Tibial artery (tissue), 4 donors: ENCODE measurements at regions of chr10 and their contacts with region 1.

Region 1: GRCh38 chr10:3239066-3239919 is 66.7 kb upstream of the PITRM1 start:
- DNase-seq: peak; percentile 65 to 76
- H3K4me3 ChIP-seq: no peak overlapping the region
- H3K27ac ChIP-seq: no peak overlapping the region
- H3K4me1 ChIP-seq: peaks cover 0 to 15% (median 2%) of the 10 kb centered on the region in 4 donors
- H3K27me3 ChIP-seq: no peaks in the 10 kb centered on the region
- CTCF ChIP-seq: peak; percentile 88 to 95

Region 2: GRCh38 chr10:3281941-3282673 is 42.8 kb after region 1 on chr10:
- intact Hi-C with region 1: no loop called
- DNase-seq: no peak
- H3K4me3 ChIP-seq: no peak overlapping the region
- H3K27ac ChIP-seq: no peak overlapping the region
- H3K4me1 ChIP-seq: no peaks in the 10 kb centered on the region
- H3K27me3 ChIP-seq: no peaks in the 10 kb centered on the region
- CTCF ChIP-seq: no peak

Region 3: GRCh38 chr10:3426190-3426701 is 187.0 kb after region 1 on chr10:
- intact Hi-C with region 1: no loop called
- DNase-seq: no peak
- H3K4me3 ChIP-seq: no peak overlapping the region
- H3K27ac ChIP-seq: peak overlapping the region in 1 of 2 donors; percentile 36
- H3K4me1 ChIP-seq: peaks cover 0 to 14% (median 9%) of the 10 kb centered on the region in 4 donors
- H3K27me3 ChIP-seq: no peaks in the 10 kb centered on the region
- CTCF ChIP-seq: no peak

Region 4: GRCh38 chr10:4656576-4657182 is 1417.4 kb after region 1 on chr10:
- intact Hi-C with region 1: loop called (anchors 5 kb)
- DNase-seq: peak; percentile 50 to 83
- H3K4me3 ChIP-seq: no peak overlapping the region
- H3K27ac ChIP-seq: no peak overlapping the region
- H3K4me1 ChIP-seq: peaks cover 0 to 29% (median 7%) of the 10 kb centered on the region in 4 donors
- H3K27me3 ChIP-seq: no peaks in the 10 kb centered on the region
- CTCF ChIP-seq: peak; percentile 89

Region 5: GRCh38 chr10:4767033-4767814 is 1527.9 kb after region 1 on chr10:
- intact Hi-C with region 1: loop called (anchors 2 kb)
- DNase-seq: peak in 1 of 2 donors; percentile 28
- H3K4me3 ChIP-seq: no peak overlapping the region
- H3K27ac ChIP-seq: peak overlapping the region; percentile 21 to 22
- H3K4me1 ChIP-seq: peaks cover 0 to 28% (median 15%) of the 10 kb centered on the region in 4 donors
- H3K27me3 ChIP-seq: no peaks in the 10 kb centered on the region
- CTCF ChIP-seq: peak; percentile 76 to 77